ENCODE measurements at regions of chr2 and their contacts with region 1.

Region 1: DNA sequence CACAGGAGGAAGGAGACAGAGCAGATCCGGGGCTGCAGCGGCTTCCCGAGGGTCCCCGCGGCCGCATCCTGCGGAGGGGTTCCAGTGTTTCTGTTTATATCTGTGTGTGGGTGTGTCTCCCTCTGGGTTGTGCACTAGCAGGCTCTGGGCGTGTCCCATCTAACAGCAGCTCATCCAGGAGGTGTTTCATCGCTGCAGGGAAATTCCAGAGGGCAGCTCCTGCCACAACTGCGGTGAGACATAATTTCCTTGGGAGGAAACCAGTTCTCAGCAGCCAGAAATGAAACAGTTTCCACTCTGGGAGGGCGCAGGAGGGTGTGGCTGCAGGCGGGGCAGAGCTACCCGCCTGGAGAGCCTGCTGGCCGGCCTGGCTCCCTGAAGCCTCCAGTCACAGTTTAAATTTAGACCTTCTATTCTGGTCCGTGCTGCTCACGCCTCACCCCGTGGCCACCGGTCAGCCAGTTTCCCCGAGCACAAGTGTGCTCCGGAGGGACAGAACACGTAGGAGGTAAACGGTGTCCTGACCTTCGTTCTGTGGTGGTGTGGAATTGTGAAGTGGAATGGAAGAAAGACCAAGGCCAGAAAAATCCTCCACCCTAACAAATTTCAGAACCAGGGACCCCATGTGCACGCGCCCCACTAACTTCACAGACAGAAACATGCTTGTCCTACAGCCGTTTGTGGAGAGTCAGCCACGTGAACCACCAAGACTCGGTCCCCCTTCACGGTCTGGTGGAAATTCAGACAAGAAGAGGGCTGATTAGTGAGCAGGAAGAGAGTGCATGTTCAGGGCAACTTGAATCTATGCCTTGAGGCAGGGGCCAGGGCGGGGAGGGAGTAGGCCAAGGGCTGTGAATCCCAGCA is 50.2 kb downstream of the TEX44 start:
- DNase-seq: no peak
- H3K4me3 ChIP-seq: no peak overlapping the region
- H3K27ac ChIP-seq: no peak overlapping the region
- H3K4me1 ChIP-seq: peaks cover 3 to 9% (median 3%) of the 10 kb centered on the region in 4 experiments; a peak in 5 of 7 replicates
- H3K27me3 ChIP-seq: no peaks in the 10 kb centered on the region
- CTCF ChIP-seq: no peak
- EP300 ChIP-seq: no peak
- POLR2A ChIP-seq: no peak
- RAD21 ChIP-seq: no peak

Region 2: GRCh38 chr2:231332872-231333500 is 309.9 kb before region 1 on chr2:
- CTCF ChIA-PET with region 1: no interaction called
- POLR2A ChIA-PET with region 1: no interaction called
- DNase-seq: no peak
- H3K4me3 ChIP-seq: no peak overlapping the region
- H3K27ac ChIP-seq: no peak overlapping the region
- H3K4me1 ChIP-seq: peaks cover 0 to 3% (median 1%) of the 10 kb centered on the region in 4 experiments; a peak in 2 of 7 replicates
- H3K27me3 ChIP-seq: no peaks in the 10 kb centered on the region
- CTCF ChIP-seq: no peak
- EP300 ChIP-seq: no peak
- POLR2A ChIP-seq: no peak
- RAD21 ChIP-seq: no peak

Region 3: GRCh38 chr2:231627384-231628120 is 15.3 kb before region 1 on chr2:
- CTCF ChIA-PET with region 1: interaction called, 22 read pairs
- POLR2A ChIA-PET with region 1: interaction called, 7 read pairs
- DNase-seq: no peak
- H3K4me3 ChIP-seq: no peak overlapping the region
- H3K27ac ChIP-seq: no peak overlapping the region
- H3K4me1 ChIP-seq: no peaks in the 10 kb centered on the region
- H3K27me3 ChIP-seq: no peaks in the 10 kb centered on the region
- CTCF ChIP-seq: no peak
- EP300 ChIP-seq: no peak
- POLR2A ChIP-seq: no peak
- RAD21 ChIP-seq: no peak

Region 4: GRCh38 chr2:231632559-231633142 is 10.2 kb before region 1 on chr2:
- CTCF ChIA-PET with region 1: interaction called, 22 read pairs
- POLR2A ChIA-PET with region 1: interaction called, 7 read pairs
- DNase-seq: no peak
- H3K4me3 ChIP-seq: no peak overlapping the region
- H3K27ac ChIP-seq: no peak overlapping the region
- H3K4me1 ChIP-seq: peaks cover 0 to 6% (median 3%) of the 10 kb centered on the region in 4 experiments; a peak in 4 of 7 replicates
- H3K27me3 ChIP-seq: no peaks in the 10 kb centered on the region
- CTCF ChIP-seq: no peak
- EP300 ChIP-seq: no peak
- POLR2A ChIP-seq: no peak
- RAD21 ChIP-seq: no peak